CD8-positive, alpha-beta T cell (primary cell): ENCODE measurements at regions of chr22 and their contacts with region 1.

Region 1: DNA sequence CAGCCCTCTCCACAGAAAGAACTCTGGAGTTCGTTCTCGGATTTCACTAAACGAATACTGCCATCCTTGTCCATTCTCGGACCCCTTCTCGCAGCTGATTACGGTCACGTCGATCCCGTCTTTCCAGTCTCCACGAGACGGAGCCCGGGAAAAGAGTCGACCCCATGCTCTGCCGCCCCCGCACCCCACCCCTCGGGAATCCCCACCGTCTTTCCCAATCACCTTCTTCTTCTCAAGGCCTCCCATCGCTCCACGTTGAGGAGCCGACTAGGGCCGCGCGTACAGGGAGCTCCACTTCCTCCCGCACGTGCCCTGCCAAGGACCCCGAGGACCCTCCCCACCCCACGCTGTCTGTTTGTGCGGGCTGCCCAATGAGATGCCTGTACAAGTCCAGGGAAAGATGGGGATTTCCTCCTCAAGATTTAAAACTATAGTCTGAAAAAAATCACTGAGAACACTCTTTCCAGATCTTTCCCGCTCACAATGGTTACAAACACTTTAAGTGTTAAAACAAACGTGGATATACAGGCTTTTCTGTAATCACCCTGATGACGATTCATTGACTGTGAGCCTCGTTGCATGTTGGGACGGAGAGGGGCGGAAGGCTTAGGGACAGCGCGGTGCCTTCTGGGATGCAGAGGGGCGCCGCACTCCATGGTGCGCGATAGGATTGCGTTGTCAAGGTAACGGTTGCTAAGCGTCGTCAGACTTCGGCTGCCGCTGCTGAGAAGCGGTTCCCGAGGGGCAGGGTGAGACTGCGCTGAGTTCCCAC is at the start of gene PES1:
- DNase-seq: peak; percentile 90 to 99 (median 95)
- ATAC-seq: peak; percentile 96
- H3K4me3 ChIP-seq: peak within 1 kb of the TSS; percentile 79 to 80
- H3K4me3 Mint-ChIP-seq: no peak within 1 kb of the TSS
- H3K27ac ChIP-seq: peak within 1 kb of the TSS; percentile 89 to 97
- H3K27ac Mint-ChIP-seq: no peak within 1 kb of the TSS
- H3K4me1 ChIP-seq: peaks cover 15% of the 10 kb centered on the region
- H3K4me1 Mint-ChIP-seq: no peaks in the 10 kb centered on the region
- H3K27me3 ChIP-seq: no peaks in the 10 kb centered on the region
- H3K27me3 Mint-ChIP-seq: peaks cover 13% of the 10 kb centered on the region
- CTCF ChIP-seq: no peak
- total RNA-seq, gene PES1: 39.7 to 47.0 TPM

Region 2: GRCh38 chr22:30262917-30263741 is 328.6 kb before region 1 on chr22:
- CTCF ChIA-PET with region 1: no interaction called
- POLR2A ChIA-PET with region 1: no interaction called
- intact Hi-C with region 1: loop called (anchors 2 to 10 kb)
- DNase-seq: peak; percentile 57 to 88 (median 82)
- ATAC-seq: no peak
- H3K4me3 ChIP-seq: peak overlapping the region; percentile 7 to 13
- H3K4me3 Mint-ChIP-seq: peak overlapping the region; percentile 43
- H3K27ac ChIP-seq: no peak overlapping the region
- H3K27ac Mint-ChIP-seq: no peak overlapping the region
- H3K4me1 ChIP-seq: peaks cover 32% of the 10 kb centered on the region
- H3K4me1 Mint-ChIP-seq: peaks cover 37% of the 10 kb centered on the region
- H3K27me3 ChIP-seq: no peaks in the 10 kb centered on the region
- H3K27me3 Mint-ChIP-seq: no peaks in the 10 kb centered on the region
- CTCF ChIP-seq: peak; percentile 100

Region 3: DNA sequence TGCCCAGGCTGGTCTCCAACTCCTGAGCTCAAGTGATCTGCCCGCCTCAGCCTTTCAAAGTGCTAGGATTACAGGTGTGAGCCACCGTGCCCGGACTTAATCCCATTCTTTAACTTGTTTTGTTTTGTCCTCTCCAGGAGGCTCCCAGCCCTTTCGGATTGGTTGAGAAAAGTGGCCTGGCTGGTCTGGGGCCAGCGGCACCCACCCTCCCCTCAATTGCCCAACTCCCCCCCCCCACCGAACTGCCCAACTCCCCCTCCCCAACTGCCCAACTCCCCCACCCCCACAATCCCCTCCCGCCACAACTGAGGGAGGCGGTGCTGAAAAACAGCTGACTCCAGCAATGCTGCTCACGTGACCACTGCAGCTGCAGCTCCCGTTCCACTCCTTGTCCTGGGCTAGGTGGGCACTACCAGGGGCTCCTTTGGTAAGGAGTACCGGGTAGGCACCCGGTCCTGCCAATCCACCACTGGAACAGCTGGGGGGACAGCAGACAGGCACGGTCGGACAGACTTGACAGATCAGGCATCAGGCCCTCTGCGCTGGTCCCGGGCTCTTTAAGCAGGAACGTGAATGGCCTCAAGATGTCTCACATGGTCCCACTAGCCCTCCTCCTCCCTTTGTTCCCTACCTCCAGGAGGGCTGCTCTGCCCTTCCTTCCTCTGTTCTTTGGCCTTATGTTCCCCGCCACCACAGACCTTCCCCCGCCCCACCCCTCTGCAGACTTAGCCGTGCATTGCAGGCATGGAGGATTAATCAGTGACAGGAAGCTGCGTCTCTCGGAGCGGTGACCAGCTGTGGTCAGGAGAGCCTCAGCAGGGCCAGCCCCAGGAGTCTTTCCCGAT is 14.9 kb after region 1 on chr22 and contains the start of gene TCN2:
- CTCF ChIA-PET with region 1: interaction called, 4 read pairs
- POLR2A ChIA-PET with region 1: interaction called, 3 read pairs
- intact Hi-C with region 1: loop called in 1 of 2 experiments (anchors 1 kb)
- DNase-seq: peak in 6 of 9 experiments; percentile 6 to 60 (median 24)
- ATAC-seq: peak; percentile 53
- H3K4me3 ChIP-seq: peak within 1 kb of the TSS; percentile 47 to 78
- H3K4me3 Mint-ChIP-seq: peak within 1 kb of the TSS; percentile 85
- H3K27ac ChIP-seq: no peak within 1 kb of the TSS
- H3K27ac Mint-ChIP-seq: no peak within 1 kb of the TSS
- H3K4me1 ChIP-seq: peaks cover 10% of the 10 kb centered on the region
- H3K4me1 Mint-ChIP-seq: peaks cover 18% of the 10 kb centered on the region
- H3K27me3 ChIP-seq: no peaks in the 10 kb centered on the region
- H3K27me3 Mint-ChIP-seq: no peaks in the 10 kb centered on the region
- CTCF ChIP-seq: no peak
- total RNA-seq, gene TCN2: 0.17 TPM in 1 of 2 experiments, not detected in the other

Region 4: GRCh38 chr22:30655532-30655931 is 63.8 kb after region 1 on chr22:
- CTCF ChIA-PET with region 1: no interaction called
- POLR2A ChIA-PET with region 1: no interaction called
- intact Hi-C with region 1: no loop called
- DNase-seq: no peak
- ATAC-seq: no peak
- H3K4me3 ChIP-seq: no peak overlapping the region
- H3K4me3 Mint-ChIP-seq: no peak overlapping the region
- H3K27ac ChIP-seq: no peak overlapping the region
- H3K27ac Mint-ChIP-seq: no peak overlapping the region
- H3K4me1 ChIP-seq: no peaks in the 10 kb centered on the region
- H3K4me1 Mint-ChIP-seq: peaks cover 2% of the 10 kb centered on the region
- H3K27me3 ChIP-seq: no peaks in the 10 kb centered on the region
- H3K27me3 Mint-ChIP-seq: no peaks in the 10 kb centered on the region
- CTCF ChIP-seq: no peak

Region 5: GRCh38 chr22:31160328-31160978 is 568.7 kb after region 1 on chr22:
- CTCF ChIA-PET with region 1: no interaction called
- POLR2A ChIA-PET with region 1: no interaction called
- intact Hi-C with region 1: loop called (anchors 1 to 2 kb)
- DNase-seq: peak in 6 of 9 experiments; percentile 11 to 55 (median 28)
- ATAC-seq: peak; percentile 34
- H3K4me3 ChIP-seq: peak overlapping the region; percentile 78 to 86
- H3K4me3 Mint-ChIP-seq: peak overlapping the region; percentile 100
- H3K27ac ChIP-seq: peak overlapping the region; percentile 72 to 90
- H3K27ac Mint-ChIP-seq: peak overlapping the region; percentile 98
- H3K4me1 ChIP-seq: peaks cover 26% of the 10 kb centered on the region
- H3K4me1 Mint-ChIP-seq: peaks cover 38% of the 10 kb centered on the region
- H3K27me3 ChIP-seq: no peaks in the 10 kb centered on the region
- H3K27me3 Mint-ChIP-seq: no peaks in the 10 kb centered on the region
- CTCF ChIP-seq: no peak

Region 6: GRCh38 chr22:31496007-31496734 is 904.4 kb after region 1 on chr22 and contains the start of gene SFI1:
- CTCF ChIA-PET with region 1: no interaction called
- POLR2A ChIA-PET with region 1: no interaction called
- intact Hi-C with region 1: loop called in 1 of 2 experiments (anchors 10 kb)
- DNase-seq: peak; percentile 93 to 98 (median 96)
- ATAC-seq: peak; percentile 83
- H3K4me3 ChIP-seq: peak within 1 kb of the TSS; percentile 83 to 91
- H3K4me3 Mint-ChIP-seq: peak within 1 kb of the TSS; percentile 95
- H3K27ac ChIP-seq: peak within 1 kb of the TSS; percentile 87 to 90
- H3K27ac Mint-ChIP-seq: peak within 1 kb of the TSS; percentile 99
- H3K4me1 ChIP-seq: peaks cover 27% of the 10 kb centered on the region
- H3K4me1 Mint-ChIP-seq: peaks cover 45% of the 10 kb centered on the region
- H3K27me3 ChIP-seq: no peaks in the 10 kb centered on the region
- H3K27me3 Mint-ChIP-seq: no peaks in the 10 kb centered on the region
- CTCF ChIP-seq: no peak
- total RNA-seq, gene SFI1: 217 to 235 TPM